Esophagus muscularis mucosa (tissue), 4 donors: ENCODE measurements at regions of chr16 and their contacts with region 1.

Region 1: GRCh38 chr16:66660422-66661209 is 35.9 kb downstream of the CMTM4 start:
- DNase-seq: no peak
- H3K4me3 ChIP-seq: no peak overlapping the region
- H3K27ac ChIP-seq: peak overlapping the region; percentile 60 to 77 (median 64)
- H3K4me1 ChIP-seq: peaks cover 23 to 30% (median 28%) of the 10 kb centered on the region in 4 donors
- H3K27me3 ChIP-seq: no peaks in the 10 kb centered on the region
- CTCF ChIP-seq: peak; percentile 20 to 40 (median 35)
- EP300 ChIP-seq: no peak
- POLR2A ChIP-seq: no peak

Region 2: GRCh38 chr16:66731101-66731500 is 70.5 kb after region 1 on chr16:
- intact Hi-C with region 1: loop called (anchors 5 kb)
- DNase-seq: no peak
- H3K4me3 ChIP-seq: no peak overlapping the region
- H3K27ac ChIP-seq: no peak overlapping the region
- H3K4me1 ChIP-seq: peaks cover 3 to 19% (median 12%) of the 10 kb centered on the region in 4 donors
- H3K27me3 ChIP-seq: no peaks in the 10 kb centered on the region
- CTCF ChIP-seq: no peak
- EP300 ChIP-seq: no peak
- POLR2A ChIP-seq: no peak